PC-9 (cell line): ENCODE measurements at regions of chr9 and their contacts with region 1.

Region 1: DNA sequence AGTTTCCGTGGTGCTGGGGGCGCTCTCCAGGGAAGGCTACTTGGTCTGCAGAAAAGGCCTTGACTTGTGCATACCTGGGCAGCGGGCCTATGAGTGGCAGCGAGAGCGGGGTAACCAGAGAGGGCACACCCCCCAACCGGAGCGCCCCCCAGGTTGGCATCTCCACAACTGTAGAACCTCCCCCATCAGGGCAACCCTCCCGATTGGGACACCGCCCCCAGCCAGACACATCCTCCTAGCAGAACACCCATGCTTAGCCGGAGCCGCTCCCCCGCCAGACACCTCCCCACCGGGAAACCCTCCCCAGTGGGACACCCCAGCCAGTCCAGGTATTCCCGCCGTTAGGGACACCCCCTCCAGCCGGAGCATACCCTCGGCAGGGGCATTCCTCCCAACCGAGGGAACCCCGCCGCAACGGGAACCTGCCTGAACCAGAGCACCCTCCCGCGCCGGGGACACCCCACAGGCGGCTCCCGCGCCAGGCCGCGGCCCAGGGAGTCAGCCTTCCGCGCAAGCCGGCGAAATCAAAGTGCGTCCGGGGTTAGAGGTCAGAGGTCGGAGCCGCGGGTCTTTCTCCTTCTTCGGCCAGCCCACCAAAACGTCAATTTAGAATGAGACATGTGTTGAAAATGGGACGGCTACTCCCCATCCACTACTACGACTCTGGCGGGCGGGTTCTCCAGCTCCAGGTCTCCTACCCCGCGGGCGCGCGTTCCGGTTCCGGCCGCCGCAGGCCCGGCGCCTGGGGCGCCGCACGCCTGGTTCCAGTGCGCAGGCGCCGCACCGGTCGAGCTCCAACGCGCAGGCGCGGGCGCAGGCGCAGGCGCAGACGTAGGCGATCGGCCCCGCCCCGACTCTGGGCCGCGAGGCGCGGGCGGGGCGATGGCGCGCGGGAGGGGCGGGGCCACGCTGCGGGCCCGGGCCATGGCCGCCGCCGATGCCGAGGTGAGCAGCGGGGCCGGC is at the start of gene EHMT1:
- DNase-seq: peak; percentile 58 to 94
- H3K4me3 ChIP-seq: peak within 1 kb of the TSS; percentile 83
- H3K27ac ChIP-seq: peak within 1 kb of the TSS; percentile 82
- H3K4me1 ChIP-seq: peaks cover 40% of the 10 kb centered on the region
- H3K27me3 ChIP-seq: no peaks in the 10 kb centered on the region
- CTCF ChIP-seq: no peak
- total RNA-seq, gene EHMT1: 111 and 116 TPM in 2 replicates

Region 2: GRCh38 chr9:137435980-137436760 is 182.2 kb before region 1 on chr9:
- CTCF ChIA-PET with region 1: no interaction called
- POLR2A ChIA-PET with region 1: no interaction called
- intact Hi-C with region 1: loop called (anchors 10 kb)
- DNase-seq: peak; percentile 86 to 97
- H3K4me3 ChIP-seq: no peak overlapping the region
- H3K27ac ChIP-seq: no peak overlapping the region
- H3K4me1 ChIP-seq: peaks cover 17% of the 10 kb centered on the region
- H3K27me3 ChIP-seq: no peaks in the 10 kb centered on the region
- CTCF ChIP-seq: no peak

Region 3: DNA sequence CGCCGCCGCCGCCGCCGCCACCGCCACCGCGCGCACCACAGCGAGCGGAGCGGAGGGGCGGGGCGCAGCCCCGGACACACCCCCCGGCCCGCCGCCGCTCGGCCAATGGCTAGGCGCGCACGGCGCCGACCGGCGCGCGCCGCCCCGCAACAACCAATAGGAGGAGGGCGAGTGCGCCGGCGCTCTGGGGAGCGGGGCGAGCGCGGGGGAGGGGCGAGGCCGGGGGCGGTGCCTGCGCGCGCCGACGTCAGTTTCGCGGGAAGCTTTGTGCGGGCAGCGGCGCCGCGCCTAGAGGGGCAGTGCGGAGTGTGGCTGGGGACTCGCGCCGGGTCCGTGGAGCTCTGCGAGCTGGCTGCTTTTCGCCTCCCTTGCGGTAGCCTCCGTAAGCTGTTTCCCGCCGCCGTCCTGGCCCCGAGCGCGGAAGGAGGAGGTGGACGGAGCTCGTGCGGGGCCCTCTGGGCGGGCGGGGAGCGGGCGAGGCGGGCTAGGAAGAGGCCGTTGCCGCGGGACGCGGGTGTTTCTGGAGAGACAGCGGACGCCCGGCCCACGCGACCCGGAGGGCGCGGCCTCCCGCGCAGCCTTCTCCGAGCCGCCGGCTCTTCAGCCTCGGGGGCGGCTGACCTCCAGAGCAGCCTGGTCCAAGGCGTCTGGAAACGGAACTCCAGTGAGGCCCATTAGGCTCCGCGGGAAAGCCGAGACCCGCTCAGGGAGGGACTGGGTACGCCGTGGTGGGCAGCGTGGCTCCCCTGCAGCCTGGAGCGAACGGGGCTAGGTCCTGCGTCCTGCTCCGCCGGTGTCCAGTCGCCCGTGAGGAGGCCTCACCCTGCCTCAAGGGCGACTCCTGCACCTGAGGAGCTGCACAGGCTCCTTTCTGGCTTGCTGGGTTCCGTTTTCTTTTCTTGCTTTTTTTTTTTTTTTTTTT is 27.7 kb before region 1 on chr9 and contains the start of gene ZMYND19:
- CTCF ChIA-PET with region 1: interaction called, 3 read pairs
- POLR2A ChIA-PET with region 1: interaction called, 6 read pairs
- intact Hi-C with region 1: loop called (anchors 2 kb)
- DNase-seq: peak; percentile 65 to 94
- H3K4me3 ChIP-seq: peak within 1 kb of the TSS; percentile 91
- H3K27ac ChIP-seq: no peak within 1 kb of the TSS
- H3K4me1 ChIP-seq: peaks cover 13% of the 10 kb centered on the region
- H3K27me3 ChIP-seq: no peaks in the 10 kb centered on the region
- CTCF ChIP-seq: no peak; the same call in 1 of the 2 replicates
- total RNA-seq, gene ZMYND19: 47.7 and 49.2 TPM in 2 replicates

Region 4: GRCh38 chr9:137605121-137606004 is 13.0 kb before region 1 on chr9 and contains the start of gene ARRDC1:
- CTCF ChIA-PET with region 1: no interaction called
- POLR2A ChIA-PET with region 1: interaction called, 9 read pairs
- intact Hi-C with region 1: loop called (anchors 1 kb)
- DNase-seq: peak; percentile 80 to 95
- H3K4me3 ChIP-seq: peak within 1 kb of the TSS; percentile 57
- H3K27ac ChIP-seq: peak within 1 kb of the TSS; percentile 30; the same call in 1 of the 2 replicates
- H3K4me1 ChIP-seq: peaks cover 38% of the 10 kb centered on the region
- H3K27me3 ChIP-seq: no peaks in the 10 kb centered on the region
- CTCF ChIP-seq: no peak
- total RNA-seq, gene ARRDC1: 116 and 127 TPM in 2 replicates

Region 5: GRCh38 chr9:137639303-137640051 is 21.1 kb after region 1 on chr9:
- CTCF ChIA-PET with region 1: no interaction called
- POLR2A ChIA-PET with region 1: no interaction called
- intact Hi-C with region 1: no loop called
- DNase-seq: no peak
- H3K4me3 ChIP-seq: no peak overlapping the region
- H3K27ac ChIP-seq: no peak overlapping the region
- H3K4me1 ChIP-seq: no peaks in the 10 kb centered on the region
- H3K27me3 ChIP-seq: no peaks in the 10 kb centered on the region
- CTCF ChIP-seq: no peak

Region 6: GRCh38 chr9:137658781-137659180 is 40.4 kb after region 1 on chr9:
- CTCF ChIA-PET with region 1: no interaction called
- POLR2A ChIA-PET with region 1: no interaction called
- intact Hi-C with region 1: no loop called
- DNase-seq: no peak
- H3K4me3 ChIP-seq: no peak overlapping the region
- H3K27ac ChIP-seq: no peak overlapping the region
- H3K4me1 ChIP-seq: no peaks in the 10 kb centered on the region
- H3K27me3 ChIP-seq: no peaks in the 10 kb centered on the region
- CTCF ChIP-seq: no peak

Region 7: GRCh38 chr9:137788561-137789294 is 170.3 kb after region 1 on chr9:
- CTCF ChIA-PET with region 1: no interaction called
- POLR2A ChIA-PET with region 1: no interaction called
- intact Hi-C with region 1: no loop called
- DNase-seq: no peak
- H3K4me3 ChIP-seq: no peak overlapping the region
- H3K27ac ChIP-seq: no peak overlapping the region
- H3K4me1 ChIP-seq: no peaks in the 10 kb centered on the region
- H3K27me3 ChIP-seq: no peaks in the 10 kb centered on the region
- CTCF ChIP-seq: no peak